ENCODE measurements at regions of chr16 and their contacts with region 1.

Region 1: GRCh38 chr16:714558-715476 is at the start of gene METRN:
- DNase-seq: peak; percentile 67 to 97 (median 82)
- ATAC-seq: peak; percentile 95
- H3K4me3 ChIP-seq: peak within 1 kb of the TSS; percentile 30
- H3K4me3 Mint-ChIP-seq: peak within 1 kb of the TSS in 9 of 10 donors; percentile 27 to 81 (median 61)
- H3K27ac ChIP-seq: no peak within 1 kb of the TSS
- H3K27ac Mint-ChIP-seq: peak within 1 kb of the TSS in 1 of 9 donors; percentile 11
- H3K4me1 ChIP-seq: peaks cover 5 to 7% of the 10 kb centered on the region in 2 donors
- H3K4me1 Mint-ChIP-seq: peaks cover 0 to 17% (median 12%) of the 10 kb centered on the region in 7 donors
- H3K27me3 ChIP-seq: peaks cover 0 to 4% of the 10 kb centered on the region in 2 donors
- H3K27me3 Mint-ChIP-seq: peaks cover 0 to 28% (median 5%) of the 10 kb centered on the region in 5 donors
- total RNA-seq, gene METRN: 4.8 to 5.1 (median 5.0) TPM

Region 2: DNA sequence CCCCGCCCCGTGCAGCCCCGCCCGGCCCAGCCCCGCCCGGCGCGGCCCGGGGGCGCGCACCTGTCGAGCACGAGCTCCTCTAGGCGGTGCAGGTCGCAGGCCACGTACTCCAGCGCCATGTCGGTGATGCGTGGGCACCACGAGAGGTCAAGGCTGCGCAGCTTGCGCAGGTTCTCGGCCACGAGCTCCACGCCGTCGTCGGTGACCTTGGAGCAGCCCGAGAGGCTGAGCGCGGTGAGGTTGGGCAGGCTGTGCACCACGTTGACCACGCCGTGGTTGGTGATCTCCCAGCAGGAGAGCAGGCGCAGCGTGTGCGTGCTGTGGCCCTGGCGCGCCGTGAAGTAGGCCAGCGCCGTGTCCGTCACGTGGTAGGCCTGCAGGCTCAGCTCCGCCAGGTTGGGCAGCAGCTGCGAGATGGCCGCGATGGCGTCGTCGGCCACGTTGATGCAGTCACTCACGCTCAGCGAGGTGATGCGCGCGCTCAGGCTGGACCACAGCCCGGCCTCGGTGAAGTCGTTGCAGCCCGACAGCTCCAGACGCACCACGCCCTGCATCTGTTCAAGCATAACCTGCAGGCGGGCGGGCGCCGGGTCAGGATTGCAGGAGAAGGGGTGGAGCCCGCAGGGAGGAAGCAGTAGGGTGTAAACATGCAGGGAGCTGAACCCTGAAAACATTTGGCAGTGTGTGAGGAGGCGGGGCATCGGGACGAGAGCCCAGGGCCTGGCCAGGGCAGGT is 19.3 kb before region 1 on chr16:
- CTCF ChIA-PET with region 1: interaction called, 11 read pairs
- POLR2A ChIA-PET with region 1: interaction called, 11 read pairs
- intact Hi-C with region 1: loop called in 1 of 2 experiments (anchors 1 kb)
- DNase-seq: peak; percentile 53 to 81 (median 74)
- ATAC-seq: peak; percentile 90
- H3K4me3 ChIP-seq: peak overlapping the region; percentile 91
- H3K4me3 Mint-ChIP-seq: peak overlapping the region; percentile 76 to 86 (median 84)
- H3K27ac ChIP-seq: peak overlapping the region; percentile 54
- H3K27ac Mint-ChIP-seq: peak overlapping the region; percentile 20 to 86 (median 79)
- H3K4me1 ChIP-seq: peaks cover 22 to 26% of the 10 kb centered on the region in 2 donors
- H3K4me1 Mint-ChIP-seq: peaks cover 4 to 40% (median 23%) of the 10 kb centered on the region in 7 donors
- H3K27me3 ChIP-seq: no peaks in the 10 kb centered on the region
- H3K27me3 Mint-ChIP-seq: peaks cover 0 to 22% (median 0%) of the 10 kb centered on the region in 5 donors

Region 3: DNA sequence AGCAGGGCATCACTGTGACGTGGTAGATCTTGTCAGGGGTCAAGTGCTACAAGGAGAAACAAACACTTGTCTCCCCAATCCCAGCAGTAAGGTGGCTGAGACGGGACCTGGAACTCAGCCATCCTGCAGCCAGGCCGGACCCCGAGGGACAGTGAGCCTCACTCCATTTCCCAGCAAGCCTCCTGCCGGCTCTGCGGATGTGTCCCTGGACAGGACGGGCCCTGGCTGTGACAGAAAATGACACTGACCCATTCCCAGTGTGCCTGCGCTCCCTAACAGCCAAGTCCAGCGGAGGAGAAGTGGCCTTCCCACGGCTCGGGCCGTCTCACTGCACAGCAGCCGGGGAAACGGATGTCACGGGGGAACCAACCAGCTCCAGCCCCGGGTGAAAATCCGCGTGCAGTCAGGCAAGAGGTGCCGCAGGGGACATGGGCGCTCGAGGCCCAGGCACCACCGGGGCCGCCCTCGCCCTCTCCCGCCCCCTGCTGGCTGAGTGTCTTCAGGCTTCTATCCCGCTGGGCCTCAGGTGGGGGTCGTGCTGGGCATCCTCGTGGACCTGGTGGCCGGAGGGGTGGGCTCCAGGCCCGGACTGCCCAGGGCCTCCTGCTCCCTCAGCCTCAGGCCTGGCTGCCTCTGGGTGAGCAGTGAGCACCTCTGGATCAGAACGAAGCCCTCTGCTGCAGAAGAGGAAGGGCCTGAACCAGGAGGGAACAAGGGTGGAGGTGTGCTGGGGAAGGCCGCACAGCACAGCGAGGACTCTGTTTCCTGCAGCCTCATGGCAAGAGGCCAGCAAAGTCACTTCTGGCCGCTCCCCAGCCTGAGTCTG is 18.8 kb after region 1 on chr16:
- CTCF ChIA-PET with region 1: interaction called, 12 read pairs
- POLR2A ChIA-PET with region 1: interaction called, 11 read pairs
- intact Hi-C with region 1: loop called in 1 of 2 experiments (anchors 1 kb)
- DNase-seq: peak in 1 of 9 donors; percentile 22
- ATAC-seq: peak; percentile 63
- H3K4me3 ChIP-seq: no peak overlapping the region
- H3K4me3 Mint-ChIP-seq: no peak overlapping the region
- H3K27ac ChIP-seq: no peak overlapping the region
- H3K27ac Mint-ChIP-seq: no peak overlapping the region
- H3K4me1 ChIP-seq: no peaks in the 10 kb centered on the region
- H3K4me1 Mint-ChIP-seq: peaks cover 0 to 15% (median 0%) of the 10 kb centered on the region in 7 donors
- H3K27me3 ChIP-seq: no peaks in the 10 kb centered on the region
- H3K27me3 Mint-ChIP-seq: no peaks in the 10 kb centered on the region

Region 4: GRCh38 chr16:788394-789126 is 73.7 kb after region 1 on chr16 and contains the start of gene CHTF18:
- CTCF ChIA-PET with region 1: interaction called, 24 read pairs
- POLR2A ChIA-PET with region 1: interaction called, 4 read pairs
- intact Hi-C with region 1: loop called (anchors 1 kb)
- DNase-seq: peak; percentile 90 to 95 (median 95)
- ATAC-seq: peak; percentile 98
- H3K4me3 ChIP-seq: peak within 1 kb of the TSS; percentile 74
- H3K4me3 Mint-ChIP-seq: peak within 1 kb of the TSS; percentile 78 to 90 (median 86)
- H3K27ac ChIP-seq: peak within 1 kb of the TSS; percentile 83
- H3K27ac Mint-ChIP-seq: peak within 1 kb of the TSS in 6 of 9 donors; percentile 53 to 89 (median 78)
- H3K4me1 ChIP-seq: peaks cover 5 to 8% of the 10 kb centered on the region in 2 donors
- H3K4me1 Mint-ChIP-seq: peaks cover 0 to 14% (median 5%) of the 10 kb centered on the region in 7 donors
- H3K27me3 ChIP-seq: no peaks in the 10 kb centered on the region
- H3K27me3 Mint-ChIP-seq: no peaks in the 10 kb centered on the region
- total RNA-seq, gene CHTF18: 32.0 to 74.8 (median 51.7) TPM

Region 5: DNA sequence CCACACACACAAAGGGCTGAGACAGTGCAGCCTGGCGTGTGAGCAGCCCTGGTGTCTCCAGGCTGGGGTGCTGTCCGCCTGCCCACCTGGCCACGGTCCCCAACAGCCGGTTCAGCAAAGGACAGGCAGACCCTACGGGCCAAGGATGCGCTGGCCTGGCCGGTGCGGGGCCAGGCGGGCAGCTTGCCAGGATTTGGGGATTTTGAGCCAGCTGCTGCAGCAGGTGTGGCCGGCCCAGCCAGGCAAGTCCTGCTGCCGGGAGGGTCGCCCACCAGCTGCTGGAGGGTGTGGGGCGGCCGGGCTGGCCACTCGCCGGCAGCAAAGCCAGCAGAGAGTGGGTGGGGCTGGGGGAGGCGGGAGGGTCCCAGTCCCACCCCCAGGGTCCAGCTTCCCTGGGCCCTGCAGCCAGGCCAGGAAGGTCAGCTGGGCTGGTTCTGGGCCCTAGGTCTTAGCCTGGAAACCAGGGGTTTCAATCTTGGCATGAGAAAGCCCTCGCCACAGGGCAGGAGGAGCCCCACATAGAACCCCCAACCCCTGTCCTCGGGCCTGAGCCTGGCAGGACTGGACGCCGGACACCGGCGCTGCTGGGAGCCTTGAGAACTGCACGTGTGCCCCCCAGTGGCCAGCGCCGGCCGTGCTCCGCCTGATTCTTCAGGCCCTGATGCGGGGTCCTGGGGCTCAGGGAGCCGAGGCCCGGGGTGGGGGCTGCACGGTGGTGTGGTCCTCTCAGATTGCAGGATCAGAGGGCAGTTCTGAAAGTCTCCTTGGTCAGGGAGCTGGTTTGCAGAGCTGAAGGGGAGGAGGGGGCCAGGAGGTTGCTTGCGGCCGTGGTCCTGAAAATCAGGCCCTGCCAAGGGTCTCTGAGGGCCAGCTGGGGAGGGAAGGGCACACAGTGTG is 340.1 kb after region 1 on chr16:
- CTCF ChIA-PET with region 1: interaction called, 3 read pairs
- POLR2A ChIA-PET with region 1: no interaction called
- intact Hi-C with region 1: loop called in 1 of 2 experiments (anchors 1 kb)
- DNase-seq: peak in 4 of 9 donors; percentile 23 to 41 (median 26)
- ATAC-seq: no peak
- H3K4me3 ChIP-seq: no peak overlapping the region
- H3K4me3 Mint-ChIP-seq: no peak overlapping the region
- H3K27ac ChIP-seq: no peak overlapping the region
- H3K27ac Mint-ChIP-seq: peak overlapping the region in 1 of 9 donors; percentile 46
- H3K4me1 ChIP-seq: no peaks in the 10 kb centered on the region
- H3K4me1 Mint-ChIP-seq: peaks cover 0 to 2% (median 0%) of the 10 kb centered on the region in 7 donors
- H3K27me3 ChIP-seq: no peaks in the 10 kb centered on the region
- H3K27me3 Mint-ChIP-seq: no peaks in the 10 kb centered on the region